Activated CD4-positive, alpha-beta memory T cell treated with anti-CD3 and anti-CD28 coated beads for 36 hours (primary cell): ENCODE measurements at regions of chr3 and their contacts with region 1.

Region 1: GRCh38 chr3:66998113-66998903 is at the start of gene KBTBD8:
- DNase-seq: peak; percentile 99
- H3K4me3 Mint-ChIP-seq: peak within 1 kb of the TSS; percentile 92
- H3K27ac Mint-ChIP-seq: peak within 1 kb of the TSS; percentile 92
- H3K4me1 Mint-ChIP-seq: peaks cover 37% of the 10 kb centered on the region
- H3K27me3 Mint-ChIP-seq: peaks cover 9% of the 10 kb centered on the region
- total RNA-seq, gene KBTBD8: 13.5 to 15.5 TPM

Region 2: GRCh38 chr3:66220602-66221377 is 777.5 kb before region 1 on chr3 and contains the start of gene SLC25A26:
- CTCF ChIA-PET with region 1: no interaction called
- POLR2A ChIA-PET with region 1: no interaction called
- intact Hi-C with region 1: loop called (anchors 2 kb)
- DNase-seq: peak; percentile 98
- H3K4me3 Mint-ChIP-seq: peak within 1 kb of the TSS; percentile 90
- H3K27ac Mint-ChIP-seq: peak within 1 kb of the TSS; percentile 87
- H3K4me1 Mint-ChIP-seq: peaks cover 50% of the 10 kb centered on the region
- H3K27me3 Mint-ChIP-seq: no peaks in the 10 kb centered on the region
- total RNA-seq, gene SLC25A26: 22.6 TPM

Region 3: DNA sequence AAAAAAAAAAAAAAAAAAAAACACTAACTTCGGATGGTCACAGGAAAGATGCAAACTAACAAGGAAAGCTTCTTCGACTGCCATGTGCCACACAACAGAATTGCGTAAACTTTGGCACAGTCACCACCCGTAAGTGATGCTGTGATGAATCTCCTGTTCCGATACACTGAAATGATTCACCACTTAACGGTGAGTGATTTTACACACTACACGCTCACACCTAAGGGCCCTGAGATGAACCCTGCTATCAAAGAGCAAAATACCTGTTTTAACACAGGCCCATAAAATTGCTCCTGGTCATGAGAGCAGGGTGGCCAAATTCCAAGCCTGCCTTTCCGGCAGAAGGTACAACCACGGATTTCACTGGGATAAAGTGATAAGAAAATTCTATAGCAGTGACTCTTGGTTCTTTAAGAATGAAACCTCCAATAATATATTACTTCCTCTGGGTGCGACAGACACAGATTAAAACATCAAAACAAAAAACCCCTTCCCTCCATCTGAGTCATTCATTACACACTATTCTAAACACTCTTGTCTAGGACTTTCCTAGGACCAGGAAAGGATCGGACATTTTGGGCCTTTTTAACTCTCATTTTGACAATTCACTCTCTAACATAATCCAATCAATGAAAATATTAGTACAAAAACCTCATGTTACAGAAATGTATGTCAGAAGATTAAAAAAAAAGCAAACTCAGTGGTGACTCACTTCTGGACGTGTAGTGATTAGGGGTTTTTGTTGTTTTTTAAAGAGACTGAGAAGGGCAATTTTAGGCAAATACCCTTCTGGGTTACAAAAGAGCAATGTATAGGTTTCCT is 525.8 kb before region 1 on chr3:
- CTCF ChIA-PET with region 1: no interaction called
- POLR2A ChIA-PET with region 1: no interaction called
- intact Hi-C with region 1: loop called (anchors 2 kb)
- DNase-seq: peak; percentile 77
- H3K4me3 Mint-ChIP-seq: peak overlapping the region; percentile 64
- H3K27ac Mint-ChIP-seq: peak overlapping the region; percentile 93
- H3K4me1 Mint-ChIP-seq: peaks cover 67% of the 10 kb centered on the region
- H3K27me3 Mint-ChIP-seq: no peaks in the 10 kb centered on the region

Region 4: GRCh38 chr3:67018105-67018788 is 19.9 kb after region 1 on chr3:
- CTCF ChIA-PET with region 1: no interaction called
- POLR2A ChIA-PET with region 1: no interaction called
- intact Hi-C with region 1: loop called (anchors 1 kb)
- DNase-seq: peak; percentile 15
- H3K4me3 Mint-ChIP-seq: peak overlapping the region; percentile 7
- H3K27ac Mint-ChIP-seq: no peak overlapping the region
- H3K4me1 Mint-ChIP-seq: peaks cover 28% of the 10 kb centered on the region
- H3K27me3 Mint-ChIP-seq: no peaks in the 10 kb centered on the region

Region 5: GRCh38 chr3:67349551-67350174 is 351.4 kb after region 1 on chr3:
- CTCF ChIA-PET with region 1: no interaction called
- POLR2A ChIA-PET with region 1: no interaction called
- intact Hi-C with region 1: loop called (anchors 2 kb)
- DNase-seq: peak; percentile 69
- H3K4me3 Mint-ChIP-seq: no peak overlapping the region
- H3K27ac Mint-ChIP-seq: no peak overlapping the region
- H3K4me1 Mint-ChIP-seq: peaks cover 12% of the 10 kb centered on the region
- H3K27me3 Mint-ChIP-seq: peaks cover 5% of the 10 kb centered on the region

Region 6: DNA sequence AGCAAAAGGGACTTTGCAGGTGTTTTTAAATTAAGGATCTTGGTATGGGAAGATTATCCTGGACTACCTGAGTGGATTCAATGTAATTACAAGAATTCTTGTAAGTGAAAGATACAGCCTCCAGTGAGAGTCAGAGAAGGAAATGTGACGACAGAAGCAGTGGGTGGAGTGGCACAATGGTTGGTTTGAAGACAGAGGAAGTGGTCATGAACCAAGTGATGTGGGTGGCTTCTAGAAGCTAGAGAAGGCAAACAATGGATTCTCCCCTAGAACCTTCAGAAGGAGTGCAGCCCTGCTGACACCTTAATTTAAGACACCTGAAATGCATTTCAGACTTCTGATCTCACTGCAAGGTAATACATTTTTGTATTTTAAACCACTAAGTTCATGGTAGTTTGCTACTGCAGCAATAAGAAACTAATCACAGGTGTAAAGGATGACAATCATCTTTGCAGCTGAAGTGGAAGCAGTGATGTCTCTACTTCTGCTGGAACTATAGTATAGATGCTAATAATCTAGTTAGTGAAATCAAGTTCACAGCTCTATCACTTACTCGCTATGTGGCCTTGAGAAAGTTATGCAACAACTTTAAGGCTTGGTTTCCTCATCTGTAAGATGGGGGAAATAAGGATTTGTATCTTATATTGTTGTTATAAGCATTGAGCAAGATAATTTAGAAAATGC is 1059.5 kb after region 1 on chr3:
- CTCF ChIA-PET with region 1: no interaction called
- POLR2A ChIA-PET with region 1: no interaction called
- intact Hi-C with region 1: loop called (anchors 10 kb)
- DNase-seq: peak; percentile 78
- H3K4me3 Mint-ChIP-seq: peak overlapping the region; percentile 50
- H3K27ac Mint-ChIP-seq: peak overlapping the region; percentile 67
- H3K4me1 Mint-ChIP-seq: peaks cover 64% of the 10 kb centered on the region
- H3K27me3 Mint-ChIP-seq: no peaks in the 10 kb centered on the region